ENCODE measurements at regions of chr19 and their contacts with region 1.

Region 1: GRCh38 chr19:45478454-45479238 is 10.8 kb downstream of the FOSB start:
- DNase-seq: peak; percentile 88
- H3K4me3 Mint-ChIP-seq: peak overlapping the region; percentile 77
- H3K27ac Mint-ChIP-seq: peak overlapping the region; percentile 95
- H3K4me1 Mint-ChIP-seq: peaks cover 29% of the 10 kb centered on the region
- H3K27me3 Mint-ChIP-seq: peaks cover 38% of the 10 kb centered on the region

Region 2: DNA sequence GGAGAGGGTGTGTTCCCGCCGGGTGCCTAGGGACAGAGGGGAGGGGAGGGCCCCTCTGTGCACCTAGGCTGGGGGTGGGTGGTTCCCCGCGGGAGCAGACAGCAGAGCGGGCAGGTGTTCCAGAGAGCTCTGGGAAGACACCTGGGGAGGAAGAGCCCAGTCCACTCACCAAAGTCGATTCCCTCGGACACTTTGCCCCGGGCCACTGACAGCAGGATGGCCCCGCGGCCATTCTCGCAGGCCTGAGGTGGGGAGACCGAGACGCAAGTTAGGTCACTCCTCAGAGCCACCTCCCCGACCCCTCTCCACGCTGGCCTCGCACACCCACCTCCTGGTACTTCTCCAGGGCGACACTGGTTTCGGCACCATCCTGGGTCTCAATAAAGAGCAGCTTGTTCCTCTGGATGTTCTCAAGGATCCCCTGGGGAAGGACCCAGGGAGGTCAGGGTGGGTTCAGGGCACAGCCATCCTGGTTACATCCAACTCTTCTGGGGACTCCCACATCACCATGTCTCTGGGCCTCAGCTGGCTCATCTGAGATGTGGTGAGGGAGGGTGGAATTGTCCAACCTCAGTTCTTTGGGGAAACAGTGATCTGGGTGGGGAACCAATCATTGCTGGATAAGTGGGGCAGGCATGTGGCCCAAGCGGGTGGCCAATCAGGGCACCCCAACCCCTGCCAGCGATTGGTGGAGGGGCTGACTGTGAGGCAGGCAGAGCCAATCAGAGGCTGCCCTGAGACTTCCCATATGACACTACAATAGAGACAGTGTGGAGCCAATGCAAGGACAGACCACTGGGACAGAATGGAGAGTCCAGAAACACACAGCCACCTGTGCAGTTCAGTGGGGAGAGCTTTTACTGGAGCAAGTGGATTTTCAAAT is 125.5 kb before region 1 on chr19:
- intact Hi-C with region 1: no loop called
- DNase-seq: no peak
- H3K4me3 Mint-ChIP-seq: no peak overlapping the region
- H3K27ac Mint-ChIP-seq: no peak overlapping the region
- H3K4me1 Mint-ChIP-seq: no peaks in the 10 kb centered on the region
- H3K27me3 Mint-ChIP-seq: no peaks in the 10 kb centered on the region

Region 3: GRCh38 chr19:45423589-45424190 is 55.0 kb before region 1 on chr19 and contains the start of gene ERCC1:
- intact Hi-C with region 1: loop called (anchors 1 kb)
- DNase-seq: peak; percentile 82
- H3K4me3 Mint-ChIP-seq: peak within 1 kb of the TSS; percentile 97
- H3K27ac Mint-ChIP-seq: peak within 1 kb of the TSS; percentile 95
- H3K4me1 Mint-ChIP-seq: peaks cover 50% of the 10 kb centered on the region
- H3K27me3 Mint-ChIP-seq: peaks cover 9% of the 10 kb centered on the region
- total RNA-seq, gene ERCC1: 143 and 152 TPM in 2 replicates

Region 4: GRCh38 chr19:45439569-45440254 is 38.9 kb before region 1 on chr19:
- intact Hi-C with region 1: loop called (anchors 1 kb)
- DNase-seq: peak; percentile 73
- H3K4me3 Mint-ChIP-seq: peak overlapping the region; percentile 77
- H3K27ac Mint-ChIP-seq: peak overlapping the region; percentile 71
- H3K4me1 Mint-ChIP-seq: peaks cover 34% of the 10 kb centered on the region
- H3K27me3 Mint-ChIP-seq: peaks cover 3% of the 10 kb centered on the region

Region 5: DNA sequence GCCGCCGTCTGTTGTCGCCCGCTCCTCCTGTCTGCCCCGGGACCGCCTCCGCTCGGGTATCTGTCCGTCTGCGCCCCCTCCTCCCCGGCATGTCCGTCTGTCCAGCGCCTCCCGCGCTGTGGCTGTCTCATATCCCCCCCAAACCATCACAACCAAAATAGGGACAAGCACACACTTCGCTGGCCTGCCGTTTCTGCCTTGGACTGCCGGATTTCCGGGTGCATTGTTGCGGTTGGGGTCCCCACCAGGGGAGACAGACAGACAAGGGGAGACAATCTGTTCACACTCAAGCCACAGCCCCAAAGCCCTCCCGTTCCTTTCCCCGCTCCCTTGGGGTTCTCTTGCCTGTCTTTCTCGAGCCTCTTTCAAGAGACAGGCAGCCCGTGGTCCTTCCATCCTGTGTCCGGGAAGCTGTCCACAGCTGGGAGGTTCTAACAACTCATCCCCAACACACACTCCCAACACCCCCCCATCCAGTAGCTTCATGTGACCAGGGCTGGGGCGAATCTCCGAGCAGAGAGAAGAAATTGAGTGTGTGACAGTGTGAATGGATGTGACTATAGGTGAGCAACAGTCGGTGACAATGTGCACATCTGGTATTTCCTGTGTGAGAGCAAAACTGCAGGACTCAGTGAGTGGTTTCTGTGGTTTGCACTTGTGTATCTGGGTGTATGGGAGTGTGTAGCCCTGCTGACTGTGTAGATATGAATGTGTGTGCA is 27.4 kb before region 1 on chr19:
- intact Hi-C with region 1: loop called (anchors 1 kb)
- DNase-seq: peak; percentile 58
- H3K4me3 Mint-ChIP-seq: peak overlapping the region; percentile 75
- H3K27ac Mint-ChIP-seq: peak overlapping the region; percentile 92
- H3K4me1 Mint-ChIP-seq: peaks cover 38% of the 10 kb centered on the region
- H3K27me3 Mint-ChIP-seq: peaks cover 17% of the 10 kb centered on the region

Region 6: GRCh38 chr19:45492627-45493470 is 14.2 kb after region 1 on chr19:
- intact Hi-C with region 1: loop called (anchors 1 kb)
- DNase-seq: no peak
- H3K4me3 Mint-ChIP-seq: peak overlapping the region; percentile 82
- H3K27ac Mint-ChIP-seq: no peak overlapping the region
- H3K4me1 Mint-ChIP-seq: peaks cover 37% of the 10 kb centered on the region
- H3K27me3 Mint-ChIP-seq: peaks cover 25% of the 10 kb centered on the region

Region 7: GRCh38 chr19:45503909-45504308 is 25.3 kb after region 1 on chr19:
- intact Hi-C with region 1: no loop called
- DNase-seq: no peak
- H3K4me3 Mint-ChIP-seq: no peak overlapping the region
- H3K27ac Mint-ChIP-seq: no peak overlapping the region
- H3K4me1 Mint-ChIP-seq: peaks cover 11% of the 10 kb centered on the region
- H3K27me3 Mint-ChIP-seq: peaks cover 8% of the 10 kb centered on the region

Region 8: GRCh38 chr19:45523642-45524256 is 45.1 kb after region 1 on chr19:
- intact Hi-C with region 1: loop called (anchors 1 kb)
- DNase-seq: peak; percentile 65
- H3K4me3 Mint-ChIP-seq: no peak overlapping the region
- H3K27ac Mint-ChIP-seq: peak overlapping the region; percentile 37
- H3K4me1 Mint-ChIP-seq: peaks cover 14% of the 10 kb centered on the region
- H3K27me3 Mint-ChIP-seq: no peaks in the 10 kb centered on the region

Region 9: GRCh38 chr19:45632468-45633196 is 154.0 kb after region 1 on chr19:
- intact Hi-C with region 1: no loop called
- DNase-seq: no peak
- H3K4me3 Mint-ChIP-seq: no peak overlapping the region
- H3K27ac Mint-ChIP-seq: peak overlapping the region; percentile 68
- H3K4me1 Mint-ChIP-seq: peaks cover 8% of the 10 kb centered on the region
- H3K27me3 Mint-ChIP-seq: no peaks in the 10 kb centered on the region